ENCODE measurements at regions of chr1 and their contacts with region 1.

Region 1: GRCh38 chr1:23790696-23791515 is at the start of gene LYPLA2:
- DNase-seq: peak; percentile 64 to 93 (median 80)
- ATAC-seq: peak; percentile 88
- H3K4me3 ChIP-seq: peak within 1 kb of the TSS; percentile 81
- H3K4me3 Mint-ChIP-seq: peak within 1 kb of the TSS; percentile 99
- H3K27ac ChIP-seq: peak within 1 kb of the TSS; percentile 77 to 85
- H3K27ac Mint-ChIP-seq: peak within 1 kb of the TSS; percentile 95
- H3K4me1 ChIP-seq: peaks cover 32% of the 10 kb centered on the region
- H3K4me1 Mint-ChIP-seq: peaks cover 28% of the 10 kb centered on the region
- H3K27me3 ChIP-seq: no peaks in the 10 kb centered on the region
- H3K27me3 Mint-ChIP-seq: no peaks in the 10 kb centered on the region
- CTCF ChIP-seq: no peak
- total RNA-seq, gene LYPLA2: 37.4 to 37.7 TPM

Region 2: DNA sequence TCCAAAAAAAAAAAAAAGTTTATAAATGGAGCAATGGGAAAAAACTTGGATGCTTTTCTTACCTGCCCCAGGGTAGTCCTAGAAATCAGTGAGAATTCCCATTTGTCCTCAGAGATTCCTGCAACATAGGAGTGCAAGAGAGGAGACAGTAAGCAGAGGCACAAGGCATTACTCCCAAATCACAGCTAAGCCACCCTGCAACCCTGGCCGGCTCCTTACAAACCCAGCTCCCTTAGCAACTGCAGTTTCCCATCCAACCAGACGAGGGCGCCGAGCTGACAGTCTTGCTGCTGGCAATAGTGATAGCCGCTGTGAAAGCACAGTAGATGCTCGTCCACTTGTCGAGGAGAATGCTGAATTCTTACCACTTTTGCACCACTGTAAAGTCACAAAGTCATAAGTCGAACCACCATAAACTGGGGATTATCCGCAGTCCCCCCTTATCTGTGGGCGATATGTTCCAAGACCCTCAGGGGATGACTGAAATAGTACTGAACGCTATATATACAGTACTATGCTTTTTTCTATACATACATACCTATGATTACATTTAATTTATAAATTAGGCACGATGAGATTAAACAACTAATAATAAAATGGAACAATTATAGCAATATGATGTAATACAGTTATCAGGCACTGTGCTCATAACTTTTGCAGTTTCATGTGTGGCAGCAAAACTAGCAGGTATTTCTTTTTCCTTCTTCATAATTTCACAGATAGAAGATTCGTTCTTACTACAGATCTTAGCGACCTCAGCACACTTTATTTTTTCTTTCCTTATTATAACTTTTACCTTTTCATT is 18.7 kb before region 1 on chr1:
- CTCF ChIA-PET with region 1: interaction called, 17 read pairs
- POLR2A ChIA-PET with region 1: interaction called, 28 read pairs
- intact Hi-C with region 1: no loop called
- DNase-seq: peak; percentile 75 to 89 (median 82)
- ATAC-seq: peak; percentile 97
- H3K4me3 ChIP-seq: no peak overlapping the region
- H3K4me3 Mint-ChIP-seq: peak overlapping the region; percentile 34
- H3K27ac ChIP-seq: no peak overlapping the region
- H3K27ac Mint-ChIP-seq: peak overlapping the region; percentile 15
- H3K4me1 ChIP-seq: peaks cover 6% of the 10 kb centered on the region
- H3K4me1 Mint-ChIP-seq: peaks cover 21% of the 10 kb centered on the region
- H3K27me3 ChIP-seq: no peaks in the 10 kb centered on the region
- H3K27me3 Mint-ChIP-seq: no peaks in the 10 kb centered on the region
- CTCF ChIP-seq: peak; percentile 95

Region 3: DNA sequence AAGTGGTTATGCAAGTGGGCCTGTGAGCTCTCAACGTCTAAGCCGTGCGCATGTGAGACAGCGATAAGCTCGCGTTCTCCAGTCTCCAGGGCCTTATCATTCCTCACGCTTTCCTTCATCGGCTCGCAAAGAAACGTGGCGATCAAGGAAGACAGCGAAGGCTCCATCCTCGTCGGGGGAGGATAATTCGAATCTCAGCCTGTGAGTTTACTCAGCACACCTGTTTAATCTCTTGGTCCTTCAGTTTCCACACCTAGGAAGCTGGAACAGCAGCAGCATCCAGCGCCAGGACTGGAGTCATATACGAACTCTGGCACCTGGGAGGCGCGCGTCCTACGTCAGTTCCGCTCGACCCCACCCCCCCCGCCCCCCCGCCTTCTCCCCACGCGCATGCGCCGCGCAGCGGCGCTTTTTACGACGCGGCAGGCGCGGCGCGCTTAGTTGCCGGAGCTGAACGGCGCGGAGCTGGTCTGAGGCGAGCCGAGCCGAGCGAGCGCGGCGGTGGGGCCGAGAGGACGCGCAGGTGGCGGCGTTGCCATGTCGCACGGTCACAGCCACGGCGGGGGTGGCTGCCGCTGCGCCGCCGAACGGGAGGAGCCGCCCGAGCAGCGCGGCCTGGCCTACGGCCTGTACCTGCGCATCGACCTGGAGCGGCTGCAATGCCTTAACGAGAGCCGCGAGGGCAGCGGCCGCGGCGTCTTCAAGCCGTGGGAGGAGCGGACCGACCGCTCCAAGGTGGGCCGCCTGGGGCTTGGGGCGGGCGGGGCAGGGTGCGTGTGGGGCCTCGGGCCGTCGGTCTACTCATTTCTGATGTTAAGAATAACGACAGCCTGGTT is 12.7 kb before region 1 on chr1 and contains the start of gene PITHD1:
- CTCF ChIA-PET with region 1: interaction called, 4 read pairs
- POLR2A ChIA-PET with region 1: interaction called, 28 read pairs
- intact Hi-C with region 1: loop called in 1 of 2 experiments (anchors 1 kb)
- DNase-seq: peak; percentile 58 to 94 (median 78)
- ATAC-seq: peak; percentile 80
- H3K4me3 ChIP-seq: peak within 1 kb of the TSS; percentile 80
- H3K4me3 Mint-ChIP-seq: peak within 1 kb of the TSS; percentile 92
- H3K27ac ChIP-seq: peak within 1 kb of the TSS; percentile 81 to 89
- H3K27ac Mint-ChIP-seq: peak within 1 kb of the TSS; percentile 98
- H3K4me1 ChIP-seq: peaks cover 34% of the 10 kb centered on the region
- H3K4me1 Mint-ChIP-seq: peaks cover 46% of the 10 kb centered on the region
- H3K27me3 ChIP-seq: no peaks in the 10 kb centered on the region
- H3K27me3 Mint-ChIP-seq: no peaks in the 10 kb centered on the region
- CTCF ChIP-seq: no peak
- total RNA-seq, gene PITHD1: 110 to 111 TPM

Region 4: GRCh38 chr1:24235921-24236781 is 445.2 kb after region 1 on chr1:
- CTCF ChIA-PET with region 1: no interaction called
- POLR2A ChIA-PET with region 1: no interaction called
- intact Hi-C with region 1: no loop called
- DNase-seq: no peak
- ATAC-seq: no peak
- H3K4me3 ChIP-seq: no peak overlapping the region
- H3K4me3 Mint-ChIP-seq: no peak overlapping the region
- H3K27ac ChIP-seq: no peak overlapping the region
- H3K27ac Mint-ChIP-seq: no peak overlapping the region
- H3K4me1 ChIP-seq: no peaks in the 10 kb centered on the region
- H3K4me1 Mint-ChIP-seq: no peaks in the 10 kb centered on the region
- H3K27me3 ChIP-seq: peaks cover 0 to 4% of the 10 kb centered on the region in 2 experiments
- H3K27me3 Mint-ChIP-seq: no peaks in the 10 kb centered on the region
- CTCF ChIP-seq: no peak

Region 5: GRCh38 chr1:25239681-25240541 is 1449.0 kb after region 1 on chr1:
- CTCF ChIA-PET with region 1: no interaction called
- POLR2A ChIA-PET with region 1: no interaction called
- intact Hi-C with region 1: loop called in 1 of 2 experiments (anchors 10 kb)
- DNase-seq: peak; percentile 64 to 94 (median 78)
- ATAC-seq: peak; percentile 86
- H3K4me3 ChIP-seq: peak overlapping the region; percentile 61
- H3K4me3 Mint-ChIP-seq: peak overlapping the region; percentile 90
- H3K27ac ChIP-seq: peak overlapping the region; percentile 79 to 89
- H3K27ac Mint-ChIP-seq: peak overlapping the region; percentile 99
- H3K4me1 ChIP-seq: peaks cover 38% of the 10 kb centered on the region
- H3K4me1 Mint-ChIP-seq: peaks cover 62% of the 10 kb centered on the region
- H3K27me3 ChIP-seq: no peaks in the 10 kb centered on the region
- H3K27me3 Mint-ChIP-seq: no peaks in the 10 kb centered on the region
- CTCF ChIP-seq: peak; percentile 69